Dorsolateral prefrontal cortex (tissue), 120 donors: ENCODE measurements at regions of chr10 and their contacts with region 1.

Region 1: GRCh38 chr10:74826142-74827044 is at the start of gene KAT6B:
- DNase-seq: peak; percentile 100
- H3K4me3 ChIP-seq: peak within 1 kb of the TSS; percentile 61 to 99 (median 91)
- H3K27ac ChIP-seq: peak within 1 kb of the TSS; percentile 92 to 100 (median 99)
- H3K27me3 ChIP-seq: no peaks in the 10 kb centered on the region
- CTCF ChIP-seq: peak in 22 of 56 donors; percentile 8 to 41 (median 20)
- total RNA-seq, gene KAT6B: 52.1 to 147 (median 101) TPM

Region 2: GRCh38 chr10:74542065-74542464 is 284.3 kb before region 1 on chr10:
- intact Hi-C with region 1: no loop called
- DNase-seq: no peak
- H3K4me3 ChIP-seq: no peak overlapping the region
- H3K27ac ChIP-seq: no peak overlapping the region
- H3K27me3 ChIP-seq: no peaks in the 10 kb centered on the region
- CTCF ChIP-seq: no peak

Region 3: DNA sequence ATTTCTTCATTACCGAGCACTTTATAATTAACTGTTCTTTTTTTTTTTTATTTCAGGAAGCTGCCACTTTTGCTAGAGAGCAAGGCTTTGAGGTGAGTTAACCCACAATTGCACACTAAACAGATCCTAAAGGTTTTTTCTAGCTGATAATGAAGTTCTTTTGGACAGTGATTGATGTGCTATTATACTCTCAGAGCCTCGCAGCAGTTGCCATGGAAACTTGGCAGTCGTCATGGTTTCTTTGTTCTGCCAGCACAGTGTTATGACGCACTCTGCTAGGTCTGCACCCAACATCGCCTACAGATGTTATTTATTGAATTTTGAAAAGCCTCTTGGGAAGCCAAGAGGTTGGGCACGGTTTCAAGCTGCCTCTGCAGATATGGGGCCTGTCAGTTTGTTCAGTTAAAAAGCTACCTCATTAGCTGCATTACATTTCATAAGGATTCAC is 237.1 kb before region 1 on chr10:
- intact Hi-C with region 1: loop called (anchors 10 kb)
- DNase-seq: peak; percentile 40 to 92 (median 84)
- H3K4me3 ChIP-seq: peak overlapping the region in 34 of 59 donors; percentile 1 to 43 (median 16)
- H3K27ac ChIP-seq: peak overlapping the region in 52 of 59 donors; percentile 1 to 80 (median 52)
- H3K27me3 ChIP-seq: no peaks in the 10 kb centered on the region
- CTCF ChIP-seq: peak in 1 of 56 donors; percentile 10

Region 4: DNA sequence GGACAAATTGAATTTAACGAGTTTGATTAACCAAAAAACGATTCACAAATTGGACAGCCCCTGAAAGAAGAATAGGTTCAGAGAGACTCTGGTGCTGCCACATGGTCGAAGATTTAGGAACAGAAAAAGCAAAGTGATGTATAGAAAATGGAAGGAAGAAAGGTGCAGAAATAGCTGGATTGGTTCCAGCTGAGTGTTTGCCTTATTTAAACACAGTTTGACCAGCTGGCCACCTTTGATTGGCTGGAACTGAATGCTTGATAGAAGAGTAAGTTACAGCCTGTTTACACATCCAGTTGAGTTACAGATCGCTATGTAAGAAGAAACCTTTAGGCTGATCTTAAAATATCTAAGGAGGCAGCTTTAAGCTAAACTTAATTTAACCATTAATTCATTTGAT is 40.3 kb before region 1 on chr10:
- intact Hi-C with region 1: no loop called
- DNase-seq: no peak
- H3K4me3 ChIP-seq: no peak overlapping the region
- H3K27ac ChIP-seq: no peak overlapping the region
- H3K27me3 ChIP-seq: no peaks in the 10 kb centered on the region
- CTCF ChIP-seq: no peak

Region 5: GRCh38 chr10:75019370-75019769 is 193.0 kb after region 1 on chr10:
- intact Hi-C with region 1: loop called (anchors 5 kb)
- DNase-seq: no peak
- H3K4me3 ChIP-seq: peak overlapping the region in 47 of 59 donors; percentile 0 to 52 (median 28)
- H3K27ac ChIP-seq: peak overlapping the region in 44 of 59 donors; percentile 1 to 71 (median 44)
- H3K27me3 ChIP-seq: no peaks in the 10 kb centered on the region
- CTCF ChIP-seq: peak; percentile 29 to 80 (median 64)

Region 6: DNA sequence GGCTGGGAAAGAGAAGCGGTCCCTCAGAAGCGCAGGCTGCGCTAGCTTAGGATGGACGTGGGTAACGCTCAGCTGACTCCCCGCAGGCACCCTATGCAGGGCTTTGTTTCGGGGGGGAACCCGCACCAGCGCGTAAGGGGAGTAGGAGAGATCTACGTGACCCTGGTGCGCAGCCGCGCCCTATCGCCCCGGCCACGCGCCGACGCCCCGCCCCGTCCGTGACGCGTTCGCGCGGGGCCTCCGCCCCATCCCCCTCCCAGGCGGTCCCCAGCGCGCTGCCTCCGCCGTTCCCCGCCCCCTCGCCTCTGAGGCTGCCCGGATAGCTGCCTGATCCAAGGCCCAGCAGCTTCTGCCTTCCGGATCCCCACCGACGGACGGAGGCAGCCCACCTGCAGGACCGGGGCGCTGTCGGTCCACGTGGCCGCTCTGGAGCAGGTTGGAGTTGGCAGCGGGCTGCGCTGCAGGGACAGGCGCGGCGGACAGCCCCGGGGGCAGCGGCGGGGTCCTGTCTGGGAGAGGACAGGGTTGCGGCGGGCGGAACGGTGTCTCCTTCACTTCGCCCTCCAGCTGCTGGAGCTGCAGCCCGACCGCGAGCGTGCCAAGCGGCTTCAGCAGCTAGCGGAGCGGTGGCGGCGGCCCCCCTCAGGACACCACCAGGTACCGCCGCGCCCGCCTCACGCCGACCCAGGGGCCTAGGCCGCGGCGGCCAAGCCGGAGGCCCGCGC is 384.1 kb after region 1 on chr10 and contains the start of gene VDAC2:
- intact Hi-C with region 1: loop called in 1 of 2 experiments (anchors 5 kb)
- DNase-seq: peak; percentile 82 to 95 (median 88)
- H3K4me3 ChIP-seq: peak within 1 kb of the TSS; percentile 68 to 100 (median 96)
- H3K27ac ChIP-seq: peak within 1 kb of the TSS; percentile 93 to 100 (median 99)
- H3K27me3 ChIP-seq: no peaks in the 10 kb centered on the region
- CTCF ChIP-seq: peak in 29 of 56 donors; percentile 4 to 55 (median 21)
- total RNA-seq, gene VDAC2: 100 to 208 (median 160) TPM